ENCODE measurements at regions of chr7 and their contacts with region 1.

Region 1: GRCh38 chr7:131945313-131945911 is 389.0 kb upstream of the PODXL start:
- DNase-seq: peak in 1 of 2 donors; percentile 88
- H3K4me3 ChIP-seq: no peak overlapping the region
- CTCF ChIP-seq: peak in 1 of 3 donors; percentile 42
- POLR2A ChIP-seq: no peak

Region 2: GRCh38 chr7:132250883-132251653 is 305.7 kb after region 1 on chr7:
- intact Hi-C with region 1: loop called (anchors 10 kb)
- DNase-seq: peak; percentile 79 to 93
- H3K4me3 ChIP-seq: no peak overlapping the region
- CTCF ChIP-seq: no peak
- POLR2A ChIP-seq: no peak

Measured in lower leg skin (tissue), 4 donors.